GM12878 (cell line): ENCODE measurements at regions of chr7 and their contacts with region 1.

Region 1: DNA sequence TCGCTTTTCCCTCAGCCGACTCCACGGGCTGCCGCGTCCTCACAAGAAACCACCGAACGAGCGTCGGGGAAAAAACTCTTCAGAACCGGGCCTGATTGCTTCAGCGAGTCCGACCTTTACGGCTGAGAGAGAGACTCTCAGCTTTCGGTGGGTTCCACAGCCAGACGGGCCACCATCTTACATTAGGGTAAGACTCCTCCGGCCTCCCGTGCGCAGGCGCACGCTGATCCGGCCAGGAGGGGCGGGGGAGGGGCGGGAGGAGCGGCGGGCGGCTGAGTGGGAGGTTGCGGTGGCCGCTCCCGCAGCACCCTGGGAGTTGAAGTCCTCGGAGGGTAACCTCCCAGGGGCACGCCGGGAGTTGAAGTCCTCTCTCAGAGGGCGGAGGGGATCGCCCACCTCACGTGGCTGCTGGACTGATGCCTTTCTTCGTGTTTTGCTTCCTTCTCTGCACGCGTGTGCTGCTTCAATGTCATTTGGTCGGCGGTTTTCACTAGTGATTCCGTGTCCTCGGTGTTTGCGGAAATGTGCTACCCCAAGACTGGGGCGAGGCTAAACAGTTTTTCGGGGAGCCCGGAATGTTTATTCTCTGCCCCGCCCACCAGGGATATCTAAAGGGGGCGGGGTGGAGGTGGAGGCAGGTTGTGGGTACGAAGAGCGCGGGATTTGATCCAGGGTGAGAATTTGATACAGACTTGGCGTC is at the start of gene CNOT4:
- DNase-seq: peak; percentile 82
- ATAC-seq: peak; percentile 93
- H3K4me3 ChIP-seq: peak within 1 kb of the TSS; percentile 94
- H3K27ac ChIP-seq: peak within 1 kb of the TSS; percentile 97
- H3K4me1 ChIP-seq: no peaks in the 10 kb centered on the region
- H3K27me3 ChIP-seq: no peaks in the 10 kb centered on the region
- CTCF ChIP-seq: no peak
- EP300 ChIP-seq: no peak
- POLR2A ChIP-seq: peak; percentile 89
- RAD21 ChIP-seq: no peak
- polyA plus RNA-seq, gene CNOT4: 11.3 to 29.6 TPM

Region 2: DNA sequence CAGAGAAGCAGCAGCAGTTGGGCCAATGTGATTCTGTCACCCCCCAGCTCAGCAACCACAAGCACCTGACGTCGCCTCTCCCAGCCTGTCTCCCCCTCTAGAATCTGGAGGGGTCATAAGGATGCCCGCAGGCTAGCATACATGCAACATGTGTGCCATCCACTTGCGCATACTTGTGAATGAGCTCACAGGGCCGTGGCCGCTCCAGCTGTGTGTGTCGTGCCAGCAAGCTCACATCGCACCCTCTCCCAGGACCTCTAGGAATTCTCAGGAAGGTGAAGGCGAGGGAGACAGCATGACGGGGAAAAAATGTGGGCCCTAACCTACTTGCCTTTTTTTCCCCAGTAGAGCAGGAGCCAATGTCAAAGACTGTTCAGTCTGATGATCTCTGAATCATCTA is 196.1 kb before region 1 on chr7:
- CTCF ChIA-PET with region 1: no interaction called
- POLR2A ChIA-PET with region 1: no interaction called
- RAD21 ChIA-PET with region 1: no interaction called
- SMC1A ChIA-PET with region 1: no interaction called
- in situ Hi-C with region 1: no loop called
- intact Hi-C with region 1: no loop called
- DNase-seq: no peak
- ATAC-seq: no peak
- H3K4me3 ChIP-seq: no peak overlapping the region
- H3K27ac ChIP-seq: no peak overlapping the region
- H3K4me1 ChIP-seq: no peaks in the 10 kb centered on the region
- H3K27me3 ChIP-seq: no peaks in the 10 kb centered on the region; a peak in 1 of 4 replicates
- CTCF ChIP-seq: no peak
- EP300 ChIP-seq: no peak
- POLR2A ChIP-seq: no peak
- RAD21 ChIP-seq: no peak

Region 3: DNA sequence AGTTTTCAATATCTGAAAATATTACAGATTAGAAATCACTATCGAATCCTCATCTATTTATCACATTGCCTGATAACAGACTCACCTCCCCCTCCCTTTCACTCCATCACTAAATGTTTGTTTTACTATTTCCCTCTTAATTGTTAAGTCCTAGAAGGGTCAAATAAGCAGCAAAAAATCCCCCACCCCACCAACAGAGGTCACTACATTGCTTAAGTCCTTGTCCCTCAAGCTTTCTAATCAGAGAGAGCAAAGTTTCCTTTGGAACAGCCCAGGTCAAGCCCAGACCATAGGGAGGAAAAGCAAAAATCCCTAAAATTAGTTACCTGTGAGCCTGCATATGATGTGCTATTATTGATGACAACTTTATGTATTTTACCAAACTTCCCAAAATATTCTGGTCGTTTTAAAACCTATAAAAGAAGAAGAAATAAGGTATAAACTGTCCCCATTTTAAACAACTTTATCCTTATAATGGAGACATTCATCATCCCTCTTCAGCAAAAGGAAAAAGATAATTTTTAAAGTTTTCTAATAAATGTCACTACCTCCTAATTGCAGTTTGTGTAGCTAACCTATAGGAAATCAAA is 95.1 kb before region 1 on chr7:
- CTCF ChIA-PET with region 1: interaction called, 16 read pairs
- POLR2A ChIA-PET with region 1: interaction called, 4 read pairs
- RAD21 ChIA-PET with region 1: interaction called, 4 read pairs
- SMC1A ChIA-PET with region 1: interaction called, 4 read pairs
- in situ Hi-C with region 1: no loop called
- intact Hi-C with region 1: loop called (anchors 5 kb)
- DNase-seq: no peak
- ATAC-seq: peak; percentile 80
- H3K4me3 ChIP-seq: no peak overlapping the region
- H3K27ac ChIP-seq: no peak overlapping the region
- H3K4me1 ChIP-seq: no peaks in the 10 kb centered on the region
- H3K27me3 ChIP-seq: no peaks in the 10 kb centered on the region
- CTCF ChIP-seq: peak; percentile 55 to 59 (median 58); a peak in 5 of 6 replicates
- EP300 ChIP-seq: no peak
- POLR2A ChIP-seq: no peak
- RAD21 ChIP-seq: peak; percentile 58

Region 4: GRCh38 chr7:135558337-135558767 is 48.3 kb after region 1 on chr7:
- CTCF ChIA-PET with region 1: interaction called, 9 read pairs
- POLR2A ChIA-PET with region 1: no interaction called
- RAD21 ChIA-PET with region 1: no interaction called
- SMC1A ChIA-PET with region 1: no interaction called
- in situ Hi-C with region 1: loop called (anchors 5 kb)
- intact Hi-C with region 1: loop called (anchors 1 kb)
- DNase-seq: peak; percentile 62
- ATAC-seq: peak; percentile 86
- H3K4me3 ChIP-seq: peak overlapping the region; percentile 96
- H3K27ac ChIP-seq: peak overlapping the region; percentile 95
- H3K4me1 ChIP-seq: peaks cover 25% of the 10 kb centered on the region
- H3K27me3 ChIP-seq: no peaks in the 10 kb centered on the region
- CTCF ChIP-seq: peak; percentile 62 to 73 (median 71); a peak in 5 of 6 replicates
- EP300 ChIP-seq: no peak
- POLR2A ChIP-seq: no peak
- RAD21 ChIP-seq: peak; percentile 64

Region 5: GRCh38 chr7:135578569-135578968 is 68.5 kb after region 1 on chr7:
- CTCF ChIA-PET with region 1: no interaction called
- POLR2A ChIA-PET with region 1: no interaction called
- RAD21 ChIA-PET with region 1: no interaction called
- SMC1A ChIA-PET with region 1: no interaction called
- in situ Hi-C with region 1: no loop called
- intact Hi-C with region 1: loop called (anchors 1 kb)
- DNase-seq: no peak
- ATAC-seq: no peak
- H3K4me3 ChIP-seq: no peak overlapping the region
- H3K27ac ChIP-seq: no peak overlapping the region
- H3K4me1 ChIP-seq: peaks cover 6% of the 10 kb centered on the region
- H3K27me3 ChIP-seq: no peaks in the 10 kb centered on the region
- CTCF ChIP-seq: no peak
- EP300 ChIP-seq: no peak
- POLR2A ChIP-seq: no peak
- RAD21 ChIP-seq: no peak

Region 6: GRCh38 chr7:135662373-135663114 is 152.5 kb after region 1 on chr7 and contains the start of gene STMP1:
- CTCF ChIA-PET with region 1: no interaction called
- POLR2A ChIA-PET with region 1: interaction called, 3 read pairs
- RAD21 ChIA-PET with region 1: no interaction called
- SMC1A ChIA-PET with region 1: no interaction called
- in situ Hi-C with region 1: no loop called
- intact Hi-C with region 1: loop called (anchors 5 kb)
- DNase-seq: peak; percentile 66
- ATAC-seq: peak; percentile 93
- H3K4me3 ChIP-seq: peak within 1 kb of the TSS; percentile 100
- H3K27ac ChIP-seq: peak within 1 kb of the TSS; percentile 68
- H3K4me1 ChIP-seq: peaks cover 2% of the 10 kb centered on the region; the same call in 1 of the 2 replicates
- H3K27me3 ChIP-seq: no peaks in the 10 kb centered on the region
- CTCF ChIP-seq: peak in 2 of 3 experiments; percentile 74 to 78; a peak in 4 of 6 replicates
- EP300 ChIP-seq: 0 out of 4 replicates have a peak, but pooled peaks of 1 of the 2 experiments have one; percentile 22
- POLR2A ChIP-seq: peak; percentile 97
- RAD21 ChIP-seq: peak; percentile 47
- polyA plus RNA-seq, gene STMP1: 63.3 to 79.9 TPM